ENCODE measurements at regions of chr11 and their contacts with region 1.

Region 1: DNA sequence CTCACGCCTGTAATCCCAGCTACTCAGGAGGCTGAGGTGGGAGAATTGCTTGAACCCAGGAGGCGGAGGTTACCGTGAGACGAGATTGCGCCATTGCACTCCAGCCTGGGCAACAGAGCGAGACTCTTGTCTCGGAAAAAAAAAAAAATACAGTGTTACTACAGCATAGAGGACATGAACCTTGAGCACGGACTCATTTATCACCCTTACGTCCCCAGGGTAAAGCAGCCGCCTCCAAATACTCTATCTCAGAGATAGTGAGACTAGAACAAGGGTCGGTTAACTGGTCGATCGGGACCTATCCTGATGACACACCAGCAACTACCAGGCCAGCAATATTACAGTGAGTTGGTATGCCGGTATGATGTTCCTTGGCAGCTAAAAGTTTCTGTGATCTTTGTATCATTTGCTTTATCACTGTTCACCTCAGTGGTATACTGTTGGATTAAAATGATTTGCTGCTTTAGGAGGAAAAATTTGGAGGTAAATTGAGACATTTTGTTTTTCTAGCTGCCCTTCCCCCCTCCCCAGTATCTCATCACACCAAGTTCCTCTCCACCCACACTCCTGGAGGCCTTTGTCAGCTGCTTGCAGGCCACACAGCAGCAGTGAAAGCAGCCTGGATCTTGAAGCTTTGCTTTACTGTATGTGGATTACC is 7.0 kb upstream of the SIDT2 start:
- DNase-seq: no peak
- H3K4me3 ChIP-seq: no peak overlapping the region
- H3K27ac ChIP-seq: peak overlapping the region in 1 of 2 experiments; percentile 22; a peak in 1 of 4 replicates
- H3K4me1 ChIP-seq: peaks cover 0 to 10% of the 10 kb centered on the region in 2 experiments; a peak in 2 of 4 replicates
- H3K27me3 ChIP-seq: no peaks in the 10 kb centered on the region
- CTCF ChIP-seq: no peak
- EP300 ChIP-seq: no peak
- RAD21 ChIP-seq: no peak

Region 2: GRCh38 chr11:117160826-117161225 is 10.7 kb before region 1 on chr11:
- CTCF ChIA-PET with region 1: interaction called, 11 read pairs
- POLR2A ChIA-PET with region 1: interaction called, 4 read pairs
- DNase-seq: no peak
- H3K4me3 ChIP-seq: no peak overlapping the region
- H3K27ac ChIP-seq: no peak overlapping the region
- H3K4me1 ChIP-seq: peaks cover 0 to 3% of the 10 kb centered on the region in 2 experiments; a peak in 2 of 4 replicates
- H3K27me3 ChIP-seq: no peaks in the 10 kb centered on the region
- CTCF ChIP-seq: no peak
- EP300 ChIP-seq: no peak
- RAD21 ChIP-seq: no peak

Region 3: GRCh38 chr11:117226388-117227385 is 55.2 kb after region 1 on chr11:
- CTCF ChIA-PET with region 1: interaction called, 16 read pairs
- POLR2A ChIA-PET with region 1: no interaction called
- DNase-seq: peak; percentile 84
- H3K4me3 ChIP-seq: no peak overlapping the region; a peak in 1 of 4 replicates
- H3K27ac ChIP-seq: no peak overlapping the region
- H3K4me1 ChIP-seq: peaks cover 14 to 16% of the 10 kb centered on the region in 2 experiments; a peak in 3 of 4 replicates
- H3K27me3 ChIP-seq: no peaks in the 10 kb centered on the region
- CTCF ChIP-seq: peak; percentile 79
- EP300 ChIP-seq: no peak
- RAD21 ChIP-seq: peak; percentile 90

Region 4: DNA sequence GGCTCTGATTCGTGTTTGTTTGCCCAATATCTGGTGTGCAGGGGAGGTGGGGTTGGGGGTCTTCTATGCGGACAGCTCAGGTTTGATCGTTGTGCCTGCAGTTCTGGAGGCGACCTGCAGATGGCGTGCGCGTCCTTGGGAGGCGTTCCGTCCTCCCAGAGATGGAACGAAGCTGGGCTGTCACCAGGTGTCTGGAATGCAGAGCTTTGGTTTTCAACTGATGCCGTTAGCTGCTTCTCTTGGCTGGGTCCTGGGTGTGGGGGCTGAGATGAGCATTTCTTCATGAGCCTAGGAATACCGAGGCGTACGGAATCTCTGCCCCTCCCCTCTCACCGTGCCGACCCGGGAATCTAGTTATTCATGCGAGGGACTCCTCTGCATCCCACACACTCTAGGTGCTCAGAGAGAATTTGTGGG is 254.7 kb after region 1 on chr11:
- CTCF ChIA-PET with region 1: no interaction called
- POLR2A ChIA-PET with region 1: no interaction called
- DNase-seq: peak; percentile 91
- H3K4me3 ChIP-seq: peak overlapping the region in 1 of 2 experiments; percentile 31; a peak in 1 of 4 replicates
- H3K27ac ChIP-seq: no peak overlapping the region
- H3K4me1 ChIP-seq: peaks cover 0 to 10% of the 10 kb centered on the region in 2 experiments; a peak in 1 of 4 replicates
- H3K27me3 ChIP-seq: no peaks in the 10 kb centered on the region
- CTCF ChIP-seq: peak; percentile 95
- EP300 ChIP-seq: no peak
- RAD21 ChIP-seq: peak; percentile 95

Measured in SK-N-SH (cell line).